Activated CD8-positive, alpha-beta T cell treated with anti-CD3 and anti-CD28 coated beads, Interleukin-2, amount 10 ng/mL, durations not matched to agents 7 days and 5 days (primary cell): ENCODE measurements at regions of chr4 and their contacts with region 1.

Region 1: GRCh38 chr4:986879-987623 is at the start of gene IDUA:
- DNase-seq: peak; percentile 89
- ATAC-seq: peak; percentile 89
- H3K4me3 Mint-ChIP-seq: peak within 1 kb of the TSS; percentile 82
- H3K27ac Mint-ChIP-seq: peak within 1 kb of the TSS; percentile 82
- H3K4me1 Mint-ChIP-seq: peaks cover 26% of the 10 kb centered on the region
- H3K27me3 Mint-ChIP-seq: no peaks in the 10 kb centered on the region
- total RNA-seq, gene IDUA: 19.0 to 20.9 TPM

Region 2: GRCh38 chr4:742742-743311 is 244.2 kb before region 1 on chr4:
- CTCF ChIA-PET with region 1: interaction called, 34 read pairs
- POLR2A ChIA-PET with region 1: no interaction called
- DNase-seq: peak; percentile 82
- ATAC-seq: peak; percentile 90
- H3K4me3 Mint-ChIP-seq: no peak overlapping the region
- H3K27ac Mint-ChIP-seq: no peak overlapping the region
- H3K4me1 Mint-ChIP-seq: no peaks in the 10 kb centered on the region
- H3K27me3 Mint-ChIP-seq: no peaks in the 10 kb centered on the region

Region 3: GRCh38 chr4:766152-766515 is 220.9 kb before region 1 on chr4:
- CTCF ChIA-PET with region 1: no interaction called
- POLR2A ChIA-PET with region 1: no interaction called
- DNase-seq: no peak
- ATAC-seq: no peak
- H3K4me3 Mint-ChIP-seq: no peak overlapping the region
- H3K27ac Mint-ChIP-seq: peak overlapping the region; percentile 32
- H3K4me1 Mint-ChIP-seq: peaks cover 6% of the 10 kb centered on the region
- H3K27me3 Mint-ChIP-seq: no peaks in the 10 kb centered on the region

Region 4: DNA sequence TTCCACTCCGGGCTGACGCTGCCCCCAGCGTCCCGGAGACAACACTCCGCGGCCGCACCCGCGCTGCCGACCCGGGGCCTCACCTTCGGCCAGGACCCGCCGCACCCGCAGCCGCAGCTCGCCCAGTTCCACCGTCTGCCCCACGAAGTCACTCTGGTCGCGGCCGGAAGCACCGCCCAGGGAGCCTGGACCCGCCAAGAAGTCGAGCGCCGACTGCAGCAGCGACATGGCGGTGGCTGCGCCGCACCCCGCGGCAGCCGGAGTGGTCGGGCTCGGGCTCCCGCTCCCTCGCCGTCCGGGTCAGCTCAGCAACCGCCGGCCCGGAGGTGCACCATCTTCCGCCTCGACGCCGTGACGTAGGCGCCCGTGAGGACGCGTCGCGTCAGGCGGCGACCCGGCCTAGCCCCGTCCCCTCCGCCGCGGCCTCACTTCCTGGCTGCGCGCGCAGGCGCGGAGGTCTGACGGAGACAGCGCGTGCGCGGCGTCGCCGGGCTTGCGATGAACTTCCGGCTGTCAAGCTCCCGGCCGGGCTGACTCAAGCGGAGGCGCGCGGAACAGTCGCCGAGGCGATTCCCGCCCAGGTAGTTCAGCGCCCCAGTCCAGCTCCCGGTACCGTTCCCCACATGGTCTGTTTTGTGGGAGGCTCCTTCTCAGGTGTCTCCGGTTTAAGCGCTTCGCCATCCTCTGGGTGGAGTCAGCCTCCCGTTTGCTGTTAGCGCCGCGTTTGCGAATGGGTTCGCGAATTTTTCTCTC is 54.9 kb before region 1 on chr4 and contains the starts of genes GAK and TMEM175:
- CTCF ChIA-PET with region 1: interaction called, 20 read pairs
- POLR2A ChIA-PET with region 1: interaction called, 7 read pairs
- DNase-seq: peak; percentile 97
- ATAC-seq: peak; percentile 93
- H3K4me3 Mint-ChIP-seq: peak within 1 kb of the TSS; percentile 85
- H3K27ac Mint-ChIP-seq: peak within 1 kb of the TSS; percentile 92
- H3K4me1 Mint-ChIP-seq: peaks cover 49% of the 10 kb centered on the region
- H3K27me3 Mint-ChIP-seq: no peaks in the 10 kb centered on the region
- total RNA-seq, gene GAK: 155 to 163 TPM
- total RNA-seq, gene TMEM175: 27.2 to 30.1 TPM

Region 5: DNA sequence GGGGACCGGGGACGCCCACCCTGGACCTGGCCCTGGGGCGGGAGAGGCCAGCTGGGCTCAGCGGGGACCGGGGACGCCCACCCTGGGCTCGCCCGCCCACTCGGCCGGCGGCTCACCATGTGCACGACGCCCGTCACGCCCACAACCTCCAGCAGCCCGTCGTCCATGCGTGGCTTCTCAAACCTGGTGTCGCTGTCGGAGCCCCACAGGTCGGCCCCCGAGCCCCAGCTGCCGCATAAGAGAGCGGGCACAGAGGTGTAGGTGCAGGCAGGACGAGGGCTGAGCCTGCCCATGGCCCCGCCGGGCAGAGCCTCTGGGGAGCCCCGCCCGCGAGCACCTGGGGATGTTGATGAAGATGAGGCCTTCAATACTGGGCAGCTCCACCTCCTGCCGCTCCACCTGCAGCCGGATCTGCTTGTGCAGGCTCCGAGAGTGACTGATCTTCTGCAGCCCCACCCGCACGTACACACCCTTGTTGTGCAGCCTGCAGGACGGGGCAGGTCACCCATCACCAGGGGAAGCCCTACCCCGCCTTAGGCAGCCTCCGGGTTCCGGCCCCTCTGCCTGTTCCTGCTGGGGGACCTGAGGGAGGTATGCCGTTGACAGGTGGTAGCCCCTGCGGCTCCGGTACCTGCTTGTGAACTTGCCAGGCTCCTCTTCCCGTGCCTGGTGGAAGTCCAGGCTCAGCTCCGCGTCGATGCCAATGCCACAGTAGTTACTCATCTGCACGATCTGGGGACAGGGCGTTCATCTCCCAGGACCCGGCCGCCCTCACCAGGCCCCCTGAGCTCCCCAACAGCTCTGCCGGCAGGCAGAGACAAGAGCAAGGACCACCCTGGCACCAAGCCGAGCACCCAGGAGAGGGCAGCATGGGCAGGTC is 25.5 kb before region 1 on chr4:
- CTCF ChIA-PET with region 1: no interaction called
- POLR2A ChIA-PET with region 1: no interaction called
- DNase-seq: no peak
- ATAC-seq: no peak
- H3K4me3 Mint-ChIP-seq: no peak overlapping the region
- H3K27ac Mint-ChIP-seq: no peak overlapping the region
- H3K4me1 Mint-ChIP-seq: no peaks in the 10 kb centered on the region
- H3K27me3 Mint-ChIP-seq: no peaks in the 10 kb centered on the region